ENCODE measurements at regions of chr3 and their contacts with region 1.

Region 1: DNA sequence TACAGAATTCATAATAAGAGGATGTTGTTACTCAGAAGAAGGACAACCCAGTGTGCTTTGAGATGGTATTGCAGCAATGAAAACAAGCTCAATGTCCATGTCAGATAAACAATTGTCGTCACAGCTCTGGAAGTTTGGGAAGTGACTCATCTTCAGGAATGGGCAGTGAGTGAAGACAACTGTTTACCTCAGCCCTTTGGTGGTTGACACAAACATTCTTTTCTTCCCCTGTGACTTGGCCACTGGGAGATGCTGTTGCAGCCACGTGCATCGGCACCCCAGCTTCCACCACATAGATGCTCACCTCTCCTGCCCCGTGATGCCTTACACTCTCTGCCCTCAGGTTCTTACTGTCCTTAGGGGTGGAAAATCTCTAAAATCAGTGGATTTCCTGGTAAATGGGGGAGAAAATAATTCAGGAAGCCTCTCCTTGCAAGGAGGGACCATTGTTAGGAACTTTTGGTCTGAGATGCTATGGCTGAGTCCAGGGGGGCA is 114.1 kb upstream of the GALNT15 start:
- DNase-seq: peak; percentile 98
- ATAC-seq: peak; percentile 94
- H3K4me3 ChIP-seq: peak overlapping the region in 1 of 3 experiments; percentile 26; a peak in 1 of 6 replicates
- H3K27ac ChIP-seq: peak overlapping the region; percentile 69
- H3K4me1 ChIP-seq: peaks cover 58% of the 10 kb centered on the region
- H3K27me3 ChIP-seq: no peaks in the 10 kb centered on the region
- CTCF ChIP-seq: peak; percentile 84
- EP300 ChIP-seq: peak; percentile 64 to 96; a peak in 3 of 4 replicates
- POLR2A ChIP-seq: no peak
- RAD21 ChIP-seq: peak; percentile 15; the same call in 1 of the 2 replicates

Region 2: GRCh38 chr3:15758295-15758694 is 302.1 kb before region 1 on chr3:
- CTCF ChIA-PET with region 1: no interaction called
- POLR2A ChIA-PET with region 1: no interaction called
- in situ Hi-C with region 1: no loop called
- intact Hi-C with region 1: no loop called
- DNase-seq: no peak
- ATAC-seq: no peak
- H3K4me3 ChIP-seq: no peak overlapping the region
- H3K27ac ChIP-seq: no peak overlapping the region
- H3K4me1 ChIP-seq: peaks cover 5% of the 10 kb centered on the region
- H3K27me3 ChIP-seq: no peaks in the 10 kb centered on the region
- CTCF ChIP-seq: no peak
- EP300 ChIP-seq: no peak
- POLR2A ChIP-seq: no peak
- RAD21 ChIP-seq: no peak

Region 3: GRCh38 chr3:16012086-16012485 is 48.3 kb before region 1 on chr3:
- CTCF ChIA-PET with region 1: no interaction called
- POLR2A ChIA-PET with region 1: no interaction called
- in situ Hi-C with region 1: no loop called
- intact Hi-C with region 1: no loop called
- DNase-seq: no peak
- ATAC-seq: no peak
- H3K4me3 ChIP-seq: no peak overlapping the region
- H3K27ac ChIP-seq: no peak overlapping the region
- H3K4me1 ChIP-seq: no peaks in the 10 kb centered on the region
- H3K27me3 ChIP-seq: no peaks in the 10 kb centered on the region; a peak in 1 of 5 replicates
- CTCF ChIP-seq: no peak
- EP300 ChIP-seq: no peak
- POLR2A ChIP-seq: no peak
- RAD21 ChIP-seq: no peak

Region 4: DNA sequence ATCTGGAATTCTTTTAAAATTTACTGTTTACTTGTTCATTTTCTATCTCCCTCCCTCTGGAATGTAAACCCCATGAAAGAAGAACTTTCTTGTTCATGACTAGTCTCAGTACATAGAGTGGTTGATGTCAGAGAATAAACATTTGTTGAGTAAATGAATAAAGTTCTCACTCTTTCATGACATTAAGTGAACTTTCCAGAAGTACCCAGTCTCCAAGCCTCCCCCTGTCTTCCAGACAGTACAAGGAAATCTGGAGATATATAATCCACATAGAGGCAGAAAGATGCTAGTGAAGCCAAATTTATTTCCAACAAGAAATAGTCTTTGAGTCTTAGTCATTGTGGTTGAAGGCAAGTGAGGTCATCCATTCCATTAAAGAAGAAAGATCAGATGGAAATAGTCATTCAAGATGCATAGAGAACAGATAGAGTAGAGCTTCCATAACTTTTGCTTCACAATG is 42.5 kb after region 1 on chr3:
- CTCF ChIA-PET with region 1: no interaction called
- POLR2A ChIA-PET with region 1: interaction called, 5 read pairs
- in situ Hi-C with region 1: no loop called
- intact Hi-C with region 1: loop called (anchors 2 kb)
- DNase-seq: peak; percentile 66
- ATAC-seq: no peak; the same call in 2 of the 3 replicates
- H3K4me3 ChIP-seq: no peak overlapping the region
- H3K27ac ChIP-seq: no peak overlapping the region
- H3K4me1 ChIP-seq: peaks cover 22% of the 10 kb centered on the region
- H3K27me3 ChIP-seq: no peaks in the 10 kb centered on the region
- CTCF ChIP-seq: no peak
- EP300 ChIP-seq: peak in 1 of 2 experiments; percentile 36; a peak in 1 of 4 replicates
- POLR2A ChIP-seq: no peak
- RAD21 ChIP-seq: no peak

Measured in HepG2 (cell line).